CD4-positive, alpha-beta T cell (primary cell): ENCODE measurements at regions of chrX and their contacts with region 1.

Region 1: DNA sequence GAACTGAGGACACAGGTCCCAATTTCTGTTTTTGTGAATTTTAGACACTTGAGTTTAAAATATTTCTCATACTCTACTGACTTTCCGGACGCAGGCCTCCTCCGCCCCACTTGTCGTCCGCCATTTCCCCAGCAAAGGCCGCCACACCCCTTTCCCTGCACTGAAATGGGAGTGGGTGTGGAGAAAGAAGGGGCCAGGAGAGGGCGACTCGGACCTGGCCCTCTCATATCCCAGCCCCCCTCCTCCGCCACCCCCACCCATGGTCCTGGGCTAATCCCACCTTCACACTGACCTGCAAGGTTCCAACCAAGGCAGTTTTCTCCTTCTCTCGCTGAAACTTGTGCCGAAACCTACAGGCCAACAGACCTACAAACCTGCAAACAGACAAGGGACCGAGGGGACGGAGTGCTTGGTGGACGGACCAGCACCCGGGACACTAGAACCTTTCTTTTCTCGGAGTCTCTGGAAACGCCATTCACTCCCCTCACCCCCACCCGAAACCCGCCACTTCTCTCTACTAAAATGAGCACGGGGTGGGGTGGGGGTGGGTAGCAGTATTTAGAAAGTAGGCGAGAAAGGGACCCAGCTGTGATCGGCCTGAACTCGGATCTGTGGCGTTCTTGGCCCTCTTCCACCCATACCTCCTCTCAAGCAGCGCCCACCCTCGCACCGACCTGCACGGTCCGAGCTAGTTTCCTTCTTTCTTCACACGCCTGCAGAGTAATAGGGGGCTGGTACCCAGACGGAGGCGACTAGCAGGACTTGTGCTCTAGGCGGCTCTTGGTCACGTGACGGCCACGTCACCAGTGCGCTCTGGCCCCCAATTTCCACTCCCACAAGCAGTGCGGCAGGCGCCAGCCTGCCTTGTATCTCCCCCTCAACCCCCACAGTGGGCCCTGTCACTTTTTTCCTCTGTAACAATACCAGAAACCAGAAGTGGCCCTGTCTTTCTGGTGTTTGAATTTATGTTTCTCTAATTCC is at the start of gene ARMCX6:
- DNase-seq: peak; percentile 45 to 89 (median 60)
- ATAC-seq: peak; percentile 86
- H3K4me3 ChIP-seq: peak within 1 kb of the TSS; percentile 77
- H3K4me3 Mint-ChIP-seq: peak within 1 kb of the TSS; percentile 97
- H3K27ac ChIP-seq: peak within 1 kb of the TSS; percentile 34 to 41
- H3K27ac Mint-ChIP-seq: peak within 1 kb of the TSS; percentile 92
- H3K4me1 ChIP-seq: peaks cover 14% of the 10 kb centered on the region
- H3K4me1 Mint-ChIP-seq: peaks cover 21% of the 10 kb centered on the region
- H3K27me3 ChIP-seq: no peaks in the 10 kb centered on the region
- H3K27me3 Mint-ChIP-seq: no peaks in the 10 kb centered on the region
- CTCF ChIP-seq: no peak
- total RNA-seq, gene ARMCX6: 35.0 to 39.5 TPM

Region 2: DNA sequence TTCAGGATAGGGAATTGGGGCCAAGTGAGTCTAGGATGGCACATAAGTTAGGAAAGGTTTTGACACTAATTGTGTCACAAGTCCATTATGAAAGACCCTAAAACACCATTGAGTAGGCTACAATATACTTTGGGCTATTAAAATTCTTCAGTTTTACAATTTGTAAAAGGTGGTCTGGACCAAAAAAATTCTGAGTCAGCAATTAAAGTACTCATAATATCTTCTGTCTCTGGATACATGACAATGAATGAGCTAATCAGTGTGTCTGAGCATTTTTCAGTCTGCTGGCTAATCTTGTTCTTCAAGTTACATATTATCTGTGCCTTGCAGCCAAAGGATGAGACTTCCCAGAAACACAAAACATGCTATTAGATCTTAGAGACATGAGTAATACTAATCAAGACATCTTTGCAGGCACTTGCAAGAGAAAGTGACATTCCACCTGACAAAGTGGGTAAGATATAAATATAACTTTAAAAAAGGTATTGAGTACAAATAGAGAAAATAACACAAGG is 52.8 kb before region 1 on chrX:
- CTCF ChIA-PET with region 1: no interaction called
- POLR2A ChIA-PET with region 1: no interaction called
- intact Hi-C with region 1: no loop called
- DNase-seq: no peak
- ATAC-seq: no peak
- H3K4me3 ChIP-seq: no peak overlapping the region
- H3K4me3 Mint-ChIP-seq: no peak overlapping the region
- H3K27ac ChIP-seq: no peak overlapping the region
- H3K27ac Mint-ChIP-seq: no peak overlapping the region
- H3K4me1 ChIP-seq: no peaks in the 10 kb centered on the region
- H3K4me1 Mint-ChIP-seq: no peaks in the 10 kb centered on the region
- H3K27me3 ChIP-seq: no peaks in the 10 kb centered on the region
- H3K27me3 Mint-ChIP-seq: peaks cover 4% of the 10 kb centered on the region
- CTCF ChIP-seq: no peak

Region 3: GRCh38 chrX:101759000-101759399 is 141.5 kb after region 1 on chrX:
- CTCF ChIA-PET with region 1: no interaction called
- POLR2A ChIA-PET with region 1: no interaction called
- intact Hi-C with region 1: loop called in 1 of 2 experiments (anchors 5 kb)
- DNase-seq: peak in 9 of 14 experiments; percentile 1 to 59 (median 11)
- ATAC-seq: peak; percentile 84
- H3K4me3 ChIP-seq: no peak overlapping the region
- H3K4me3 Mint-ChIP-seq: no peak overlapping the region
- H3K27ac ChIP-seq: no peak overlapping the region
- H3K27ac Mint-ChIP-seq: no peak overlapping the region
- H3K4me1 ChIP-seq: no peaks in the 10 kb centered on the region
- H3K4me1 Mint-ChIP-seq: no peaks in the 10 kb centered on the region
- H3K27me3 ChIP-seq: no peaks in the 10 kb centered on the region
- H3K27me3 Mint-ChIP-seq: no peaks in the 10 kb centered on the region
- CTCF ChIP-seq: peak; percentile 41

Region 4: DNA sequence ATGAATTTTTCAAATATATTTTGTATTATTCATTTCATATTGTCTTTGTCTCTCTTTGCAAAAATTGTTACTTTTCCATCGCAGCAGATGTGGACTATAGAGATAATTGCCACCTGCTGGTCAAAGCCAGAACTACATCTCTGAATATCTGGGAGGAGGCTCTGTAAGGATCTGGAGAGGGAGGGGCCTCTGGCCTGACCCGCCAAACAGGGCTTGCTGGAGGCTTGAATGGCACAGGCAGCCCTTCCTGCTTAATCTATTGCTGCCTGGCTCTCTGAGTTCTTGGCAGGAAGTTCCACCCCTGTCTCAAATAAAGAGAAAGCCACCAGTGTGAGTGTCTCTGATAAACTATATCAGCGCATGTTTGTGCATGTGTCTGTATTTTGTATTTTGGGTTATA is 181.9 kb after region 1 on chrX:
- CTCF ChIA-PET with region 1: no interaction called
- POLR2A ChIA-PET with region 1: no interaction called
- intact Hi-C with region 1: loop called in 1 of 2 experiments (anchors 5 kb)
- DNase-seq: peak; percentile 51 to 89 (median 70)
- ATAC-seq: peak; percentile 100
- H3K4me3 ChIP-seq: no peak overlapping the region
- H3K4me3 Mint-ChIP-seq: peak overlapping the region; percentile 44
- H3K27ac ChIP-seq: no peak overlapping the region
- H3K27ac Mint-ChIP-seq: peak overlapping the region; percentile 21
- H3K4me1 ChIP-seq: peaks cover 3% of the 10 kb centered on the region
- H3K4me1 Mint-ChIP-seq: peaks cover 12% of the 10 kb centered on the region
- H3K27me3 ChIP-seq: no peaks in the 10 kb centered on the region
- H3K27me3 Mint-ChIP-seq: no peaks in the 10 kb centered on the region
- CTCF ChIP-seq: peak; percentile 57

Region 5: GRCh38 chrX:101863902-101864301 is 246.4 kb after region 1 on chrX:
- CTCF ChIA-PET with region 1: no interaction called
- POLR2A ChIA-PET with region 1: no interaction called
- intact Hi-C with region 1: no loop called
- DNase-seq: no peak
- ATAC-seq: no peak
- H3K4me3 ChIP-seq: no peak overlapping the region
- H3K4me3 Mint-ChIP-seq: no peak overlapping the region
- H3K27ac ChIP-seq: no peak overlapping the region
- H3K27ac Mint-ChIP-seq: no peak overlapping the region
- H3K4me1 ChIP-seq: no peaks in the 10 kb centered on the region
- H3K4me1 Mint-ChIP-seq: no peaks in the 10 kb centered on the region
- H3K27me3 ChIP-seq: no peaks in the 10 kb centered on the region
- H3K27me3 Mint-ChIP-seq: no peaks in the 10 kb centered on the region
- CTCF ChIP-seq: no peak